ENCODE measurements at regions of chr10 and their contacts with region 1.

Region 1: DNA sequence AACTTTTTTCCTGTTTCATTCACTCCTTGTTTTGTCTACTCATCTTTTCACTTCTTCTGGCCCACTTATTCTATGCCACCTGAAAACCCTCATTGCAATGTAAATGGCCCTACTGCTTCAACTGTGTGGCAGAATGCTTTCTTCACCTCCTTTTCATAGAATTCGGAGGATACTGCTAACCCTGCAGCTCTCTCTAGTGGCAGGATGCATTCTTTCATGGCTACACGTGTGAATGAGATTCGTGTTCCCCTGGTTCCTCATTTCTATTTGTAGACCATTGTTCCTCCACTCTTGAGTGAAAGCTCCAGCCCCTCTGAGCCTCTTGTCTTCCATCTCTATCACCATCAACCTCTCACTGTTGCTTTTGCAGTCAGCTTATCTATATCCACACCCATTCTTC is 20.9 kb upstream of the CYP26C1 start:
- DNase-seq: no peak
- H3K4me3 Mint-ChIP-seq: no peak overlapping the region
- H3K27ac Mint-ChIP-seq: no peak overlapping the region
- H3K4me1 Mint-ChIP-seq: no peaks in the 10 kb centered on the region
- H3K27me3 Mint-ChIP-seq: no peaks in the 10 kb centered on the region
- CTCF ChIP-seq: no peak

Region 2: GRCh38 chr10:93006435-93007039 is 33.2 kb before region 1 on chr10:
- CTCF ChIA-PET with region 1: no interaction called
- intact Hi-C with region 1: loop called (anchors 2 kb)
- DNase-seq: peak; percentile 10
- H3K4me3 Mint-ChIP-seq: no peak overlapping the region
- H3K27ac Mint-ChIP-seq: no peak overlapping the region
- H3K4me1 Mint-ChIP-seq: no peaks in the 10 kb centered on the region
- H3K27me3 Mint-ChIP-seq: no peaks in the 10 kb centered on the region
- CTCF ChIP-seq: no peak